ENCODE measurements at regions of chr11 and their contacts with region 1.

Region 1: GRCh38 chr11:65487413-65488272 is 11.2 kb upstream of the MALAT1 start:
- DNase-seq: peak; percentile 100
- H3K4me3 ChIP-seq: no peak overlapping the region
- H3K27ac ChIP-seq: peak overlapping the region; percentile 81
- H3K4me1 ChIP-seq: peaks cover 59% of the 10 kb centered on the region
- H3K27me3 ChIP-seq: no peaks in the 10 kb centered on the region
- CTCF ChIP-seq: no peak
- POLR2A ChIP-seq: peak; percentile 49

Region 2: GRCh38 chr11:65471410-65471762 is 16.3 kb before region 1 on chr11:
- CTCF ChIA-PET with region 1: interaction called, 247 read pairs
- POLR2A ChIA-PET with region 1: interaction called, 12 read pairs
- dilution Hi-C with region 1: no loop called
- intact Hi-C with region 1: loop called (anchors 1 kb)
- DNase-seq: peak; percentile 83
- H3K4me3 ChIP-seq: no peak overlapping the region
- H3K27ac ChIP-seq: peak overlapping the region; percentile 89
- H3K4me1 ChIP-seq: peaks cover 19% of the 10 kb centered on the region
- H3K27me3 ChIP-seq: no peaks in the 10 kb centered on the region
- CTCF ChIP-seq: peak; percentile 70 to 78
- POLR2A ChIP-seq: no peak

Region 3: DNA sequence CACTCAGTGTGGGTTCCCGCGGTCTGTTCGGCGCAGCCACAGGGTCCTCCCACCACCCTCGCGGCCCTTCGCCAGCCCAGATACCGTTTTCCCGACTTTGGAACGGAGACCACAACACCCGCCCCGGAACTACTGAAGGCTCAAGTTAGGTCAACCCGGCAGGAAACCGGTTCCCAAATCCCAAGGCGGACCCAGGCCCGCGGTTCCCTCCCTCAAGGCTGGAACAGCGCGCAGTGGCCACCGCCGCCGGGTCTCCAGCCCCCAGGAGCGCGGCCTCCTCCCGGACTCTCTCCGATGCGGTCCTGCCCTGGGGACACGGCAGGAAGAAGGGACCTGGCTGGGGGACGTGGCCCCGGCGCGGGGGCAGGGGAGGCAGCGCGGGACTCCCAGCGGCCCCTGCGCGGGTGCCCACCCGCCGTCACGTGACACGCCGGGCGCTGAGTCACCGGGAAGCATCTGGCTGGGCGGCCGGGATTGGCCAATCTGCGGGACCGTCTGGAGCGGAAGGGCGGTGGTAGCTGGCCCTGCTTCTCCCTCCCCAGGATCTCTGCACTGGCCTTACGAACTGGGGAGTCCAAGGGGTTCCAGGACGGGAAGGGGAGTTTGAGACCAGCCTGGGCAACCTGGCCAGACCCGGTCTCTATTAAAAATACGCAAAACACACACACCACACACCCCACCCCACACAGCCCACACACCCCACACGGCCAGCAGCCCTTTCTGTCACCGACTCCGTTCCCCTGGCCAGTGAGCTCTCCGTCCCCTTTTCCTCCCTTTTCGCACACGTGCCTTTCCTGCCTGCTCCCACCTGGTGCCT is 10.3 kb before region 1 on chr11:
- CTCF ChIA-PET with region 1: interaction called, 247 read pairs
- POLR2A ChIA-PET with region 1: interaction called, 12 read pairs
- dilution Hi-C with region 1: no loop called
- intact Hi-C with region 1: loop called (anchors 1 kb)
- DNase-seq: peak; percentile 94
- H3K4me3 ChIP-seq: peak overlapping the region; percentile 35 to 56 (median 54)
- H3K27ac ChIP-seq: peak overlapping the region; percentile 88
- H3K4me1 ChIP-seq: peaks cover 26% of the 10 kb centered on the region
- H3K27me3 ChIP-seq: no peaks in the 10 kb centered on the region
- CTCF ChIP-seq: no peak
- POLR2A ChIP-seq: peak; percentile 95